Right ventricle myocardium inferior (tissue), 1 donor: ENCODE measurements at regions of chr5 and their contacts with region 1.

Region 1: GRCh38 chr5:73792687-73793320 is 166.8 kb downstream of the ARHGEF28 start:
- DNase-seq: no peak
- ATAC-seq: no peak

Region 2: DNA sequence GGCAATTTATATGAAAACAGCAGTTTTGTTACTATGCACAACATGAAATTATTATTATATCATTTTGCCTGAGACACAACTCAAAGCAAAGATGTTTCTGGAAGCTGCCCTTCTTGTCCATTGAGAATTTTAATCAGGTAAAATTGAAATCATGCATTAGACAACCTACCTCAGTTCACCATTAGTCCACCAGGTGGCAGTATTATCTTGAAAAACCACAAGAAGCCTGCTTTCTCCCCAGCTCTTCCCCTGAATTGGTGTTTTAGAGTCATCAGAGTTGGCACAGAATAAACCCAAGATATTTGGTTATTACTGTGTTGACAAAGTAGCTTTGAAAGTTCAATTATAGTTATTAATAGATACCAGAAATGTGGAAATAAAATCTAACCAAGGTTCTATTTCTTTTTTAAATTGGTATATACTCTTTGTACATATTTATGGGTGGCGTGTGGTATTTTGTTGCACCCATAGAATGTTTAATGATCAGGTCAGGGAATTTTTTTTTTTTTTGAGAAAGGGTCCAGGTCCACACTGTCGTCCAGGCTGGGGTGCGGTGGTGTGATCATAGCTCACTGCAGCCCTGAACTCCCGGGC is 201.6 kb before region 1 on chr5:
- intact Hi-C with region 1: loop called (anchors 1 kb)
- DNase-seq: no peak
- ATAC-seq: no peak

Region 3: GRCh38 chr5:73826301-73827105 is 33.7 kb after region 1 on chr5:
- intact Hi-C with region 1: no loop called
- DNase-seq: no peak
- ATAC-seq: no peak

Region 4: DNA sequence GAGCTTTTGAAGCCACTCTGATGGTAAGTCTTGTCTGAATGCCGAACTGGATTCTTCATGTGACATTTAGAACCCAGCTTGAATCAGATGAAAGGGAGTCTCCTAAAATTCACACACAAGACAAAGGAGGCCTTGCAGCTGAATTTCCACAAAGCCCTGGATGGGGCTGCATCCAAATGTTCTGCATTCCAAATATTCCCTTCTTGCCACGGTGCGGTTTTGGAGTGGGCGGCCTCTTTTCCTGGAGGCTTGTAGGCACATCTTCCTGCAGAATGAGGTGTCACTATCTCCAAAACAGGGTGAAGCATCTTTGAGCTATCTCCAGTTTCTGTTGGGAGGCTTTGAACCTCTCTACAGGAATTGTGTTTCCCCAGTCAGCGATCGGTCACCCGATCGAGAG is 175.9 kb after region 1 on chr5:
- intact Hi-C with region 1: no loop called
- DNase-seq: no peak
- ATAC-seq: no peak